Heart right ventricle (tissue), 16 donors: ENCODE measurements at regions of chr1 and their contacts with region 1.

Region 1: GRCh38 chr1:150829743-150830142 is 21.7 kb upstream of the CTSK start:
- DNase-seq: no peak
- ATAC-seq: no peak
- H3K4me3 ChIP-seq: no peak overlapping the region
- H3K27ac ChIP-seq: no peak overlapping the region
- H3K4me1 ChIP-seq: no peaks in the 10 kb centered on the region
- H3K27me3 ChIP-seq: no peaks in the 10 kb centered on the region
- CTCF ChIP-seq: peak in 1 of 9 donors; percentile 28

Region 2: DNA sequence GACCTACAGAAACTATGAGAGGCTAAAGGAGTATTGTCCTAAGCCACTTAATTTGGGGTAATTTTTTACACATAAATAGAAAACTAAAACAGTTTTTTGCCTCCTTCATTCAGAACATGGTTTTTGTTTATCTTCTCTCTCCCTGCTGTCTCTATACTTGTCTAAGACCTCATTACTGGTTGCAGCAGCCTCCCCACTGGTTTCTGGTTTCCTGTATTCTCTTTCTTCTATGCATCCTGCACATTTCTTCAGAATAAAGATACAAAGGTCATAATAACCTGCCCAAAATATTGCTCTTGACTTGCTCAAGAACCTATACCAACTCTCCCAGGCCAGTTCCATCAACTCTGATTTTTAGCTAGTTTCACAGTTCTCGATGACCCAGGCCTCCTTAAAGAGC is 950.2 kb before region 1 on chr1:
- intact Hi-C with region 1: no loop called
- DNase-seq: no peak
- ATAC-seq: no peak
- H3K4me3 ChIP-seq: no peak overlapping the region
- H3K27ac ChIP-seq: peak overlapping the region in 1 of 10 donors; percentile 45
- H3K4me1 ChIP-seq: peaks cover 0 to 18% (median 13%) of the 10 kb centered on the region in 9 donors
- H3K27me3 ChIP-seq: no peaks in the 10 kb centered on the region
- CTCF ChIP-seq: no peak

Region 3: GRCh38 chr1:150346316-150346715 is 483.4 kb before region 1 on chr1:
- intact Hi-C with region 1: loop called in 1 of 10 experiments (anchors 10 kb)
- DNase-seq: no peak
- ATAC-seq: no peak
- H3K4me3 ChIP-seq: no peak overlapping the region
- H3K27ac ChIP-seq: no peak overlapping the region
- H3K4me1 ChIP-seq: no peaks in the 10 kb centered on the region
- H3K27me3 ChIP-seq: no peaks in the 10 kb centered on the region
- CTCF ChIP-seq: no peak

Region 4: DNA sequence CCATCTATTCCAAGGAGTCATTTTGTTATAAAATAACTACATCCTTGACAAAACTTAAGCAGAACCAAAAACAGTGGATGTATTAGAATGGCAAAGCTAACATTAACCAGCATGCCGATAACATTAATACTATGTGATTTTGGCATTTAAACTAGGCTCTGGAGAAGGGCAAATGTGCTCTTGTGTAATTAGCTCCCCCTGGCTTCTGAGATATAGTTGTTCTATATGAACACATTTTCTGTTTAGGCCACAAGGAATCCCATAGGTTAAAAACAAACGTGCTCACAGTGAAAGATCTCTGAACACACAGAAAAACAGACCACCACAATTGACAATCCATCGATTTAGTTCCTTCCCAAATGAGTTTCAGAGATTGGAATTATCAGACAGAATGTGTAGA is 399.9 kb before region 1 on chr1:
- intact Hi-C with region 1: no loop called
- DNase-seq: no peak
- ATAC-seq: no peak
- H3K4me3 ChIP-seq: no peak overlapping the region
- H3K27ac ChIP-seq: no peak overlapping the region
- H3K4me1 ChIP-seq: no peaks in the 10 kb centered on the region
- H3K27me3 ChIP-seq: no peaks in the 10 kb centered on the region
- CTCF ChIP-seq: peak in 6 of 9 donors; percentile 15 to 35 (median 20)

Region 5: GRCh38 chr1:150778409-150778808 is 51.3 kb before region 1 on chr1:
- intact Hi-C with region 1: no loop called
- DNase-seq: no peak
- ATAC-seq: no peak
- H3K4me3 ChIP-seq: no peak overlapping the region
- H3K27ac ChIP-seq: no peak overlapping the region
- H3K4me1 ChIP-seq: peaks cover 0 to 22% (median 0%) of the 10 kb centered on the region in 9 donors
- H3K27me3 ChIP-seq: no peaks in the 10 kb centered on the region
- CTCF ChIP-seq: no peak